Activated T-helper 1 cell treated with anti-CD3 and anti-CD28 coated beads, Interleukin-12 subunit alpha, Interleukin-12 subunit beta, Interleukin-2, Interleukin-4 antibody, amounts not matched to agents 30 ng/mL and 10 ng/mL and 1 ng/mL, durations not matched to agents 14 hours and 24 hours and 36 hours (primary cell): ENCODE measurements at regions of chr7 and their contacts with region 1.

Region 1: DNA sequence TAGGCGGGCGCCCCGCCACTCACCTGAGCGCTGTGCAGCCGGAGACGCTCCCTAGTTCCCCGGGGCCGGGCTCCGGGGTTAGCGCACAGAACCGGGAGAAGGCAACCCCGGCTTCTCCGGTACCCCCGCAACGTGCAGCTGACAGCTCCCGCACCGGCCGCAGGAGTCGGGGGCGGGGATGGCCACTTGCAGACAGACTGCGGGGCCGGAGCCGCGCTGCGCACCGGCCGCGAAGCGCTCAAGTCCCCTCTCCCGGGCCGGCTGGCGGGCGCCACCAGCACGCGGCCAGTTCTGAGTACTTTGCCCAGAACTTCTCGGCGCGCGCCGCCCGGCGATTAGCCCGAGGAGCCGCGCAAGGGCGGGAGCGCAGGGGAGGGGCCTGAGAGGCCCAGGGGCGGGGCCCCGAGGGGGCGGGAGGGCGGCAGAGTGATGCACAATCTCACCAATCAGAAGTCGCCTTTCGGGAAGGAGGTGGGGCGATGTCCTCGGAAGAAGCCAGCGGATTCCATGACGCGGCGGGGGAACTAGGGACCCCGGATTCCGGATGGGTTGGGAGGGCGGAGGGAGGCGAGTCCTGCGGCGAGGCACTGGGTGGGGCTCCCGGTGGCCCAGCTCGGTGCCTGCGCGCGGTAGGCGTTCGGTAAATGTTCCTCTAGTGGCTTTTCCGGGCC is at the start of gene OSBPL3:
- DNase-seq: peak; percentile 91
- H3K4me3 Mint-ChIP-seq: peak within 1 kb of the TSS; percentile 96
- H3K27ac Mint-ChIP-seq: peak within 1 kb of the TSS; percentile 96
- H3K4me1 Mint-ChIP-seq: peaks cover 58% of the 10 kb centered on the region
- H3K27me3 Mint-ChIP-seq: peaks cover 2% of the 10 kb centered on the region
- total RNA-seq, gene OSBPL3: 90.6 and 101 TPM in 2 replicates

Region 2: DNA sequence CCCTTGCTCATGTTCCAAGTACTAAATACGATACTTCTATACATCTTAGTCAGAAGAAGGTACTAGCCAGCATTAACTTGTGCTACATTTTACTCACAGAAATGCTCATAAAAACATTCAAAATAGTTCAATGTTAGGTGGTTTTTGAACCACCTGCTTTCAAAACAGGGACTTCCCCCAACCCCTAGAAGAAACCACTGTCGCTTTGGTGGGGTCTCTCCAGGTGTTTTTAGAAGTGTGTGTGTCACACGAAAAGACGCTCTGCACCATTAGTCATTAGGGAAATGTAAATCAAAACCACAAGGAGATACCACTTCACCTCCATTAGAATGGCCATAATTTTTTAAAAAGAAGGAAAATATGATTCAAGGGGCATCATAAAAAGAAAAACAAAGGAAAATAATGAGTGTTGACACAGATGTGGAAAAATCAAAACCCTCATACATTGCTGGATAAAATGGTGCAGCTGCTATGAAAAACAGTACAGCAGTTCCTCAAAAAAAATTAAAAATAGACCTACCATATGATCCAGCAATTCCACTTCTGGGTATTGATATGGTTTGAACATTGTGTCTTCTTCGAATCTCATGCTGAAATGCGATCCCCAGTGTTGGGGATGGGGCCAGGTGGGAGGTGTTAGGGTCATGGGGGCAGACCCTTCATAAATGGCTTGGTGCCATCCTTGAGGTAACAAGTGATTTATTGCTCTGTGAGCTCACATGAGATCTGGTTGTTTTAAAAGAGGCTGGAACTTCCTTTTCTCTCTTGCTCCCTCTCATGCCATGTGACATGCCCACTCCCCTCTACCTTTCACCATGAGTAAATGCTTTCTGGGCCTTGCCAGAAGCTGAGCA is 1606.6 kb before region 1 on chr7:
- intact Hi-C with region 1: loop called (anchors 5 kb)
- DNase-seq: no peak
- H3K4me3 Mint-ChIP-seq: peak overlapping the region; percentile 9
- H3K27ac Mint-ChIP-seq: peak overlapping the region; percentile 94
- H3K4me1 Mint-ChIP-seq: peaks cover 49% of the 10 kb centered on the region
- H3K27me3 Mint-ChIP-seq: peaks cover 6% of the 10 kb centered on the region

Region 3: DNA sequence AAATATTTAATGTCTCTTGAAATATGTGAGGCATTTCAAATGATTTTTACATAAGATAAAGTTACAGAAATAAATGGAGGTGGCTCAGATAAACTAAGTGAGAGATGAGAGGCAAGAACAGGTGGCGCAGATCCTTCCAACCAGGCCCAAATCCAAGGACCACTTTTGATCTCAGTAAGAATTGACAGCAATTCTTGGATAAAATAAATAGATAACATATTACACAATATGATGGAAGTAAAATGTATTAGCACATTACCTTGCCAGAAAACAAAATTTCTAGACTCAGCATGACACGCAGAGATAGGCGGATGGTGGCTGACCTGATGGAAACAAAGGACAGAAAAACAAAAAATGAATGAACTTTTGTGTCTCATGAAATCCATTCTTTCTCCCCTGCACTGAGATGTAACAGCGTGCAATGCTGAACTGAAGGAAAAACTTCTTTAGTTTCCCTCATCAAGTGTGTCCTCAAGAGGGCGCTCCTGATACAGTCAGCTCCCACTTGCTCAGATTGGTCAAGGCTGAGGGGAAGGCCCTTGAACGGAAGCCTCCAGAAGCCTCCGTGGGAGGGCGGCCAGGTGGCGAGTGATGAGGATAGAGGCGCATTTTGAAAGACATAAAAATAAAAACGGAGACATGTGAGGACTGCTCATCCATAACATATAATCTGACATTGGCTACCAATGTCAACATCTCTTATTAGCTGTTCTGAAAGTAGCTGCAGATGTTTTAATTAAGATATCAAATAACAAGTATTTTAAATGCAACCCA is 159.9 kb before region 1 on chr7:
- intact Hi-C with region 1: loop called (anchors 1 kb)
- DNase-seq: peak; percentile 75
- H3K4me3 Mint-ChIP-seq: peak overlapping the region; percentile 73
- H3K27ac Mint-ChIP-seq: peak overlapping the region; percentile 98
- H3K4me1 Mint-ChIP-seq: peaks cover 54% of the 10 kb centered on the region
- H3K27me3 Mint-ChIP-seq: peaks cover 2% of the 10 kb centered on the region

Region 4: DNA sequence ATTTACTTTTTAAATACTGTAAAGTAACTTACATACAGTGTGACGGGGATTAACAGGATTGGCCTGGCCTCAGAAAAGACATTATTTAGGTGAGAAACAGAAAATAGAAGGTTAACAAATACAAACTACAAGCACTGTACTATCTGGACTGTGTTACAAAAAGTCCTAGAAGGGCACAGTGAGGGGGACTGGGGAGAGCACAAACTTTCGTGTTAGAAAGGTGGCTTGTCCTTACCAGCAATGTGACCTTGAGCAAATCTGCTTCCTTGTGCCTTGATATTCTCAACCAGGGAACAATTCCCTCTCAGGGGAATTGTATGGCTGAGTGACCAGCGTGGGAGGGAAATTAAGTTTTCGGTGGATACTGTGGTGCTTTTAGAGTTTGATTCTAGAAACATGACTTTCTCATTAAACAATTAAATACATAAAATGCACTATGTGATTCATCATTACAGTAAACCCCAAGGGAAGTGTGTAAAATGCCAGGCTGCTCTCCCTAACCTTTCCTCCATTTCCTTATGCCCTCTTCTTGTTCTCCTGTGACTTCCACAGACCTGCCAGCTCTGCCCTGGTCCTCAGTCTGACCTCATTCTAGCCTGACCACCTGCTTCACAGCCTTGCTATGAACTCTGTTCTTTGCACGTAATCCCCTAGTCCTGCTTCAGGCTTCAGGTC is 57.8 kb before region 1 on chr7:
- intact Hi-C with region 1: loop called (anchors 1 kb)
- DNase-seq: no peak
- H3K4me3 Mint-ChIP-seq: peak overlapping the region; percentile 3
- H3K27ac Mint-ChIP-seq: peak overlapping the region; percentile 91
- H3K4me1 Mint-ChIP-seq: peaks cover 95% of the 10 kb centered on the region
- H3K27me3 Mint-ChIP-seq: no peaks in the 10 kb centered on the region

Region 5: GRCh38 chr7:25069900-25070443 is 90.0 kb after region 1 on chr7:
- intact Hi-C with region 1: loop called (anchors 1 kb)
- DNase-seq: peak; percentile 16
- H3K4me3 Mint-ChIP-seq: no peak overlapping the region
- H3K27ac Mint-ChIP-seq: no peak overlapping the region
- H3K4me1 Mint-ChIP-seq: peaks cover 27% of the 10 kb centered on the region
- H3K27me3 Mint-ChIP-seq: peaks cover 2% of the 10 kb centered on the region

Region 6: DNA sequence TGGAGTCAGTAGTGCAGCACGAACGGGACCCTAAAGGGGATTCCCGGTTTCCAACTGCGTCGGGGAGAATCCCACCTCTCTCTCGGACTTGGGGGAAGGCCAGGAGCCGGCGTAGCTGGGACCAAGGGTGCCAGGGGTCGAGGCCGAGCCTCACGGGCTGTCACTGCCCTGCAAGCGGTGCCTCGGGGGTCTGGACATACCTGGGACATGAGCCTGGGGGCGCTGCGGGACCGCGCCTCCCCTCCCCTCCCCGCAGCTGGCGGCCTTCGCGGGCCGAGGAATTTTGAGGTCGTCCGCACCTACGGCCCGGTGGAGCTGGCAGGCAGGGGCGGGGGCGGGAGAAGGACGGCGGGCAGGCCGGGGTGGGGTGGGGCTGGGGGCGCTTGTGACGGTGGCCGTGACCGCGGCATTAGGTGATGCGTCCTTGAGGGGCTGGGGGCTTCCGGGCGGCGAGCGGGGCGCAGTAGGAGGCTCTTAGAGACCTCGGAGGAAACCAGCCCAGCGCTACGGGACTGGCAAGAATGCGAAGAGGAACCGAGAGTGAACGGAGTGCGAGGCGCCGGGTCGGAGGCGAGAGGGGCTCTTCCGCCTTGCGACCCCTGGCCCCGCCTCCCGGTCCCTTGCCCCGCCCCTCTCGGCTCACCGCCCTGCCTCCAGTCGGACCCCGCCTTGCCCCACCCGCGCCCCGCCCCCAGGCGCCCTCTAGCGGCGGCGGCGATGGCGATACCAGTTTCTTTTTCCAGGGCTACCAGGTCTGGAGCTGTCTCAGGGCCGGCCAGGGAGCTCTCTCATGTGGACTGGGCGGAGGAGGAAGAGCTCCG is 200.0 kb after region 1 on chr7:
- intact Hi-C with region 1: loop called (anchors 5 kb)
- DNase-seq: peak; percentile 91
- H3K4me3 Mint-ChIP-seq: peak overlapping the region; percentile 80
- H3K27ac Mint-ChIP-seq: peak overlapping the region; percentile 53
- H3K4me1 Mint-ChIP-seq: peaks cover 16% of the 10 kb centered on the region
- H3K27me3 Mint-ChIP-seq: peaks cover 14% of the 10 kb centered on the region